Esophagus squamous epithelium (tissue), 5 donors: ENCODE measurements at regions of chrX and their contacts with region 1.

Region 1: DNA sequence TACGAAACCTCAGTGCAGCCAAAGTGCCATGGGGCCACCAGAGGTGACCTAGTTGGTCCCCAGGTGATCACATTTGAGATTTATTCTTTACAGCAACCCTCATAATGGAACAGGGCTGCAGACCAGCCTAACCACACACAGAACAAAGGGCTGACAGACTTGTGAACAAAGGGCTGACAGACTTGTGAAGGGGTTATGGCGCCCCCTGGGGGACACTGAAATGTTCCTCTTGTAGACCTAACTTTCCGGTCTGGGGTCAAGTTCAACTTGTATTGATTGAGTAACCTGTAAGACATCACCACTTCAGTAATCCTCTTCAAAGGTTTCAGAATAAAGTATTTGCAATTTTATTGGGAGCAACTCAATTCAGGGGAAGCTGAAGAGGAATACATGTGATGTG is 175.9 kb upstream of the RPS6KA3 start:
- DNase-seq: peak; percentile 22
- H3K4me3 ChIP-seq: no peak overlapping the region
- H3K27ac ChIP-seq: no peak overlapping the region
- H3K4me1 ChIP-seq: no peaks in the 10 kb centered on the region
- H3K27me3 ChIP-seq: no peaks in the 10 kb centered on the region
- CTCF ChIP-seq: peak; percentile 46 to 69 (median 60)
- POLR2A ChIP-seq: no peak

Region 2: GRCh38 chrX:20252381-20253231 is 190.0 kb before region 1 on chrX:
- intact Hi-C with region 1: loop called (anchors 5 kb)
- DNase-seq: no peak
- H3K4me3 ChIP-seq: no peak overlapping the region
- H3K27ac ChIP-seq: peak overlapping the region in 3 of 4 donors; percentile 29 to 68 (median 42)
- H3K4me1 ChIP-seq: peaks cover 0 to 11% (median 0%) of the 10 kb centered on the region in 3 donors
- H3K27me3 ChIP-seq: no peaks in the 10 kb centered on the region
- CTCF ChIP-seq: peak; percentile 43 to 70 (median 64)
- POLR2A ChIP-seq: no peak

Region 3: GRCh38 chrX:20382518-20383297 is 59.9 kb before region 1 on chrX:
- intact Hi-C with region 1: loop called (anchors 10 kb)
- DNase-seq: no peak
- H3K4me3 ChIP-seq: no peak overlapping the region
- H3K27ac ChIP-seq: no peak overlapping the region
- H3K4me1 ChIP-seq: peaks cover 0 to 12% (median 0%) of the 10 kb centered on the region in 3 donors
- H3K27me3 ChIP-seq: no peaks in the 10 kb centered on the region
- CTCF ChIP-seq: no peak
- POLR2A ChIP-seq: no peak